Activated naive CD4-positive, alpha-beta T cell treated with anti-CD3 and anti-CD28 coated beads for 36 hours (primary cell): ENCODE measurements at regions of chr9 and their contacts with region 1.

Region 1: DNA sequence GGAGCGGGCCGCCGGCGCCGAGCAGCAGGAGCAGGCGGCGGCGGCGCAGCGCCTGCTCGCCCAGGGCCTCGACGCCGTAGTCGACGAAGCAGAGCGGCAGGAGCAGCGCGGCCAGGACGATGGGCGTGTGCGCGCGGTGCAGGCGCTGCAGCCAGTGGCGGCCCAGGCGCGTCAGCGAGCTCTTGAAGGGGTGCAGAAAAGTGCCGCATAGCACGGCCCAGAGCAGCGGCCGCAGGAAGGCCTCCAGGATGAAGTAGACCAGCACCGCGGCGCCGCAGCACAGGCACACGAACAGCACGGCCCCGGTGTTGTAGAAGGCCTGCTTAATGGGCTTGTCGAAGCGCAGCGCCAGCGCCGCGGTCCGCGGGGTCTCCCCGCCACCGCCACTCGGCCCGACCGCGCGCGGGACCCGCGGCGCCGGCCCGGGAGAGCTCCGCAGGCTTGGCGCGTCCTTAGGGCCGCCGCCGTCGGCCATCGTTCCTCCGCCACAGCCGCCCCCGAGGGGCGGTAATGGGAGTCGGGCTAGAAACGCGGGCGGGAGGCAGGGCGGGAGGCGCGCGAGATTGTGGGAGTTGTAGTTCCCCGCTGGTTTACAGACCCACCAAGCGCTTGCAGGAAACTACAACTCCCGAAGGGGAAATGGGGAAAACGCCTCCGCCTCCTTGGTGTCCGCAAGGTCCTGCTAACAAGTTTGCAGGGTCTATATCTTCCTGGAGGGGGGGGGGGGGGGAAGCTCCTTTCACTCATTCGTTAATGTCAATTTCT is at the start of gene TMEM245:
- DNase-seq: peak; percentile 97
- H3K4me3 Mint-ChIP-seq: peak within 1 kb of the TSS; percentile 90
- H3K27ac Mint-ChIP-seq: peak within 1 kb of the TSS; percentile 78
- H3K4me1 Mint-ChIP-seq: peaks cover 40% of the 10 kb centered on the region
- H3K27me3 Mint-ChIP-seq: no peaks in the 10 kb centered on the region
- total RNA-seq, gene TMEM245: 19.9 TPM

Region 2: GRCh38 chr9:108933718-108934322 is 185.8 kb before region 1 on chr9 and contains the start of gene ELP1:
- CTCF ChIA-PET with region 1: interaction called, 3 read pairs
- intact Hi-C with region 1: loop called (anchors 1 kb)
- DNase-seq: peak; percentile 94
- H3K4me3 Mint-ChIP-seq: peak within 1 kb of the TSS; percentile 95
- H3K27ac Mint-ChIP-seq: peak within 1 kb of the TSS; percentile 92
- H3K4me1 Mint-ChIP-seq: peaks cover 27% of the 10 kb centered on the region
- H3K27me3 Mint-ChIP-seq: no peaks in the 10 kb centered on the region
- total RNA-seq, gene ELP1: 22.3 to 27.3 TPM

Region 3: GRCh38 chr9:108991479-108991878 is 128.1 kb before region 1 on chr9:
- CTCF ChIA-PET with region 1: no interaction called
- intact Hi-C with region 1: no loop called
- DNase-seq: no peak
- H3K4me3 Mint-ChIP-seq: no peak overlapping the region
- H3K27ac Mint-ChIP-seq: no peak overlapping the region
- H3K4me1 Mint-ChIP-seq: peaks cover 8% of the 10 kb centered on the region
- H3K27me3 Mint-ChIP-seq: no peaks in the 10 kb centered on the region

Region 4: DNA sequence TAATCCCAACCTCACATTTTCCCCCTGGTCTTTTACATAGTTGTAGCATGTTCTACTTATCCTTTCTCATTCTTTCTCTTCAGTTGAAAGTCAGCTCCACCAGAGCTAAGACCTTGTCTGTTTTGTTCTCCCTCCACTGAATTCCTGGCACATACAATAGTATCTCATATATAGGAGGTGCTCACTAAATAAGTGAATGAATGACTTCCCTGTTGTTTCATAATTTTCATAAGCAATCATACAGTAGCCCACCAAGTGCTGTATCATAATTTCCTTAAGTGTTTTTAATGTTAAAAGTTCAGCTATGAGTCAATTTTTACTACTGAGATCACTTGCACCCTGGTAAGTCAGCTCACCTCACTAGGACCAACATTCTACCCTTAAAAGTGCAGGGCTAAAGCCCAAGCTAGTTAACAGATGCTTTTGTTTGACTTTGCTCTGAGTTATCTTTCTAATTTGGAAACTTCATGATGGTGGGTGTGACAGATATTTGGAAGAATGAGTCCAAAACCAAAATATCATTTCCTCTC is 27.5 kb before region 1 on chr9:
- CTCF ChIA-PET with region 1: interaction called, 5 read pairs
- intact Hi-C with region 1: loop called (anchors 1 kb)
- DNase-seq: no peak
- H3K4me3 Mint-ChIP-seq: no peak overlapping the region
- H3K27ac Mint-ChIP-seq: no peak overlapping the region
- H3K4me1 Mint-ChIP-seq: peaks cover 49% of the 10 kb centered on the region
- H3K27me3 Mint-ChIP-seq: no peaks in the 10 kb centered on the region

Region 5: GRCh38 chr9:109182940-109183798 is 63.5 kb after region 1 on chr9:
- CTCF ChIA-PET with region 1: no interaction called
- intact Hi-C with region 1: loop called (anchors 1 kb)
- DNase-seq: peak; percentile 23
- H3K4me3 Mint-ChIP-seq: no peak overlapping the region
- H3K27ac Mint-ChIP-seq: no peak overlapping the region
- H3K4me1 Mint-ChIP-seq: peaks cover 15% of the 10 kb centered on the region
- H3K27me3 Mint-ChIP-seq: peaks cover 3% of the 10 kb centered on the region

Region 6: GRCh38 chr9:109320742-109321448 is 201.3 kb after region 1 on chr9 and contains the start of gene EPB41L4B:
- CTCF ChIA-PET with region 1: no interaction called
- intact Hi-C with region 1: loop called (anchors 10 kb)
- DNase-seq: peak; percentile 95
- H3K4me3 Mint-ChIP-seq: peak within 1 kb of the TSS; percentile 69
- H3K27ac Mint-ChIP-seq: no peak within 1 kb of the TSS
- H3K4me1 Mint-ChIP-seq: peaks cover 10% of the 10 kb centered on the region
- H3K27me3 Mint-ChIP-seq: peaks cover 50% of the 10 kb centered on the region
- total RNA-seq, gene EPB41L4B: 0.24 to 0.25 TPM